ENCODE measurements at regions of chr22 and their contacts with region 1.

Region 1: DNA sequence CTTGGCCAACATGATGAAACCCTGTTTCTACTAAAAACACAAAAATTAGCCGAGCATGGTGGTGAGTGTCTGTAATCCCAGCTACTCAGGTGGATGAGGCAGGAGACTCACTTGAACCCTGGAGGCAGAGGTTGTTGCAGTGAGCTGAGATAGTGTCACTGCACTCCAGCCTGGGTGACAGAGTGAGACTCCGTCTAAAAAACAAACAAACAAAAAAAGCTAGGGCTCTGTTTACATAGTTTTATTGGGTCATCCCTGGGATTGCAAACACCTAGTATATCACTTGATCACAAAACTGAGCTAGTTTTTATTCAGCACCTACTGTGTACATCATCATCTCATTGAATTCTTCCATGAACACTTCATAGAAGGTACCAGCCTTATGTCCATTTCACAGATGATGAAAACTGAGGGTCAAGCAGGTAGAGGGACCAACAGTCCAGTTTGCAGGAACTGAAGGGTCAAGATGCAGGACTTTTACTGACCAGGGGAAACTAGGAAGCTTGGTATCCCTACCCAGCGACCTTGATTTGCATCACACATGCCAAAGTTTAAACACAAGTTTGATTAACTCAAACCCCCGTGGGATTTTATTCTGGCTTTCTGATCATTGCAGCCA is 9.2 kb upstream of the MRTFA start:
- DNase-seq: no peak
- CTCF ChIP-seq: no peak

Region 2: GRCh38 chr22:40487663-40488249 is 157.9 kb before region 1 on chr22:
- CTCF ChIA-PET with region 1: interaction called, 12 read pairs
- POLR2A ChIA-PET with region 1: no interaction called
- DNase-seq: peak; percentile 43
- CTCF ChIP-seq: peak; percentile 65

Region 3: DNA sequence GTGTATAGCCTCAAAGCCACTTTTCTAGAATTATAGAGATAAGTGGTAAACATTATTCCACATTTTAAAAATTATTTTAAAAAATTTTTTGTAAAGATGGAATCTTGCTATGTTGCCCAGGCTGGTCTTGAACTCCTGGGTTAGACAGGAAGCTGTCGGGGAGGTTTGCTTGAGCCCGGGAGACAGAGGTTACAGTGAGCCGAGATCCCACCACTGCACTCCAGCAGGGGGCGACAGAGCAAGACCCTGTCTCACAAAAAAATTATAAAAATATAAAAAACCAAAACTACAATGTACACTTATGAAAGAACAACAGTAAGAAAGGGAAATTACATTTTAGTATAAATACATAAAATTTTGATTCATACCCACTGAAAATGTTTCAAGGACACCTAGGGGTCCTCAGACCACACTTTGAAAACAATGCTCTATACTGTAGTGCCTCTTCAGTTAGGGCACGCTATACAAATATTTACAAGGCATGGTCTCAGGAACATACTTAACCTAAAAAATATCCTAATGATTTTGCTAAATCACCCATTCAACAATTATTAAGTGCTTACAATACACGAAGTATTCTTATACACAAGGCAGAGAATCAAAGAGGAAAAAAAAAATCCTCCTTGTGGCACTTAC is 120.3 kb before region 1 on chr22:
- CTCF ChIA-PET with region 1: interaction called, 60 read pairs
- POLR2A ChIA-PET with region 1: no interaction called
- DNase-seq: no peak
- CTCF ChIP-seq: peak; percentile 58

Region 4: GRCh38 chr22:40597526-40598430 is 47.9 kb before region 1 on chr22:
- CTCF ChIA-PET with region 1: interaction called, 10 read pairs
- POLR2A ChIA-PET with region 1: no interaction called
- DNase-seq: no peak
- CTCF ChIP-seq: no peak

Region 5: DNA sequence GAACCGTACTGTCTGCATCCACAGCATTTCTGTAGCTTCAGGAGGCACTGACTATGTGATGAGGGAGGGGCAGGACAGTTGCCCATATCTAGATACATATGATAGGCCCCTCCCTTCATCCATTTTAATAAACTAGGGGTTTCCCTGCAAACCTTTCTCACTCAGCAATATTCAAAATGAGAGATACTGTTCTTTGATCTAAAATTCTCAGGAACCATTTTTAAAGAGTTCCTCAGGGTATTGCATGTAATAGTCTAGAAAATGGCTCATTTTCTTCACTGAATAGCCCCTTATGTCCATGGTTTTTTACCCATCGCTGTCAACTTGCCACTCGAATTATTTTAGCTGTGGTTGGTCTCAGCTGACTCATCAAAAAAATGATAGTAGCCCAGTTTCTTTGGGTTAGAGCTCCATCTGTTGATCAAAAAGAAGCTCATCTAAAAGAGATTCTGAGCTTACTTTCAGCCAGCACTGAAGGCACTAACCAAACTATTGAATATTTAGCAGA is 253.2 kb after region 1 on chr22:
- CTCF ChIA-PET with region 1: interaction called, 12 read pairs
- POLR2A ChIA-PET with region 1: no interaction called
- DNase-seq: peak; percentile 69
- CTCF ChIP-seq: peak; percentile 49

Region 6: DNA sequence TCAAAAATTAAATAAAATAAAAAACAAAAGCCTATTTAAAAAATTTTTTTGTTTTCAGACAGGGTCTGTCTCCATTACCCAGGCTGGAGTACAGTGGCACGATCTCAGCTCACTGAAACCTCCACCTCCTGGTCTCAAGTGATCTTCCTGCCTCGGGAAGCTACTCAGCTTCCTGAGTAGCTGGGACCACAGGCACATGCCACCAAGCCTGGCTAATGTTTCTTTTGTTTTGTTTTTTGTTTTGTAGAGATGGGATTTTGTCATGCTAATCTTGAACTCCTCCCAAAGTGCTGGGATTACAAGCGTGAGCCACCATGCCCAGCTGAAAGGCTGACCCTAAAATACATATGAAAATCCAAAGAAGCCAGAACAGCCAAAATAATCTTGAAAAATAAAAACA is 539.0 kb after region 1 on chr22:
- CTCF ChIA-PET with region 1: no interaction called
- POLR2A ChIA-PET with region 1: no interaction called
- DNase-seq: no peak
- CTCF ChIP-seq: no peak

Measured in GM10248 (cell line).